ENCODE measurements at regions of chr7 and their contacts with region 1.

Region 1: DNA sequence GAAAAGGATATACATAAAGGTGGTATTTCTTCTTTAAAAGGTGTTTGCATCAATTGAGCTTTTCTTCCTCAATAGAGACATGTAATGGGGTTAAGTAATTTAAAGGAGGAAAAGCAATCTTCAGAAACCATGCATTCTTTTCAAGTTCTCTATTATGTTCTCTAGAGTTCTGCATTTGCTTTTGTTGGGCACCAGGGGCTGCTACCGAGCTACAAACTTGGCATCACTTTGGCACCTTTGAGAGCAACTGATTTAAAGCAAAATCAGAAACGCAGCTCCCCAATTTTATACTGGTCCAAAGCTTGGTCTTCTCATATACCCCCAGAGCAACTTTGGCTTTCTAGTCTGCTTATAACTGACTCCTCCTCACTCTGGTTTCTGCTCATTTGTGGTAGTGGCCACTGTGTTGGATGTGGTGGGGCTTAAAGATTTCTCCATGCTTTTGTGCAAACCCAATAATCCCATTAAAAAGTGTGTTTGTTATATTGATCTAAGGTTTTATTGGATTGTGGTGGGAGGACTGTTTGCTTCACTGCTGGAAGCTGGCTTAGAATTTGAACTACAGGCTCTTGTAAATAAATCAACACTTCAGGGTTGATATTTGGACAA is 712.1 kb downstream of the PHTF2 start:
- DNase-seq: peak in 1 of 2 experiments; percentile 41
- H3K4me3 ChIP-seq: no peak overlapping the region
- H3K27ac ChIP-seq: no peak overlapping the region
- H3K4me1 ChIP-seq: peaks cover 0 to 4% (median 2%) of the 10 kb centered on the region in 4 experiments; a peak in 4 of 7 replicates
- H3K27me3 ChIP-seq: no peaks in the 10 kb centered on the region
- CTCF ChIP-seq: peak; percentile 10 to 81 (median 81)
- EP300 ChIP-seq: no peak
- POLR2A ChIP-seq: no peak
- RAD21 ChIP-seq: peak; percentile 94 to 95

Region 2: GRCh38 chr7:78487464-78487863 is 23.2 kb before region 1 on chr7:
- CTCF ChIA-PET with region 1: no interaction called
- POLR2A ChIA-PET with region 1: no interaction called
- DNase-seq: no peak
- H3K4me3 ChIP-seq: no peak overlapping the region
- H3K27ac ChIP-seq: no peak overlapping the region
- H3K4me1 ChIP-seq: peaks cover 0 to 19% (median 10%) of the 10 kb centered on the region in 4 experiments; a peak in 4 of 7 replicates
- H3K27me3 ChIP-seq: no peaks in the 10 kb centered on the region
- CTCF ChIP-seq: no peak
- EP300 ChIP-seq: no peak
- POLR2A ChIP-seq: no peak
- RAD21 ChIP-seq: no peak

Region 3: DNA sequence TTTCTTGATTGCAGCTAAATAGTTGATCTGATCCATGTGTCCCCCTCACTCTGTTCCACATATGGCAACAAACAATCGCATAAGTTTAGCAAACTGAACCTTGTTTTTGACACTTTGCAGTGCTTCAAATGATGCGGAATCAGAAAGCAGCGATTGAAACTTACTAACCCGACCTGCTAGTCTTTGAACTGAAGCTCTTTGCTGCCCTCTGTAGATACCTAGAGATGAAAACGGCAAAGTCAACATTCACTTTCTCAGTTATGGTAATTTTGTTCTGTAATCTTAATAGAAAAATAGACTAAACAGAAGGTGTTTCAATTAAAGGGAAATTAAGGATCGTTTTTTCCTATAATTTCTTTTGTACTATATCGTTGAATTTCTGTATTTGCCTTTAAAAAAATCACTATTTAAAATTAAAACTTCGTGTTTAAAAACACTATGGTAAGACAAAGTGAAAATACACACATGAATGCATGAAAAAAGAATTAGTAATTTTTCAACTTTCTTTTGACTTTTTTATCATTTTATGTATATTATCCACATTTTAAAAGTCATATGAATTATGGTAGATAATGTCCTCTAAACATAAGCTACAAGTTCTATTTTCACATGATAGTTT is 666.3 kb after region 1 on chr7:
- CTCF ChIA-PET with region 1: interaction called, 12 read pairs
- POLR2A ChIA-PET with region 1: no interaction called
- DNase-seq: no peak
- H3K4me3 ChIP-seq: no peak overlapping the region
- H3K27ac ChIP-seq: no peak overlapping the region
- H3K4me1 ChIP-seq: no peaks in the 10 kb centered on the region
- H3K27me3 ChIP-seq: no peaks in the 10 kb centered on the region
- CTCF ChIP-seq: peak in 2 of 3 experiments; percentile 53 to 64; a peak in 2 of 4 replicates
- EP300 ChIP-seq: no peak
- POLR2A ChIP-seq: no peak
- RAD21 ChIP-seq: peak; percentile 82 to 85